ENCODE measurements at regions of chr6 and their contacts with region 1.

Region 1: DNA sequence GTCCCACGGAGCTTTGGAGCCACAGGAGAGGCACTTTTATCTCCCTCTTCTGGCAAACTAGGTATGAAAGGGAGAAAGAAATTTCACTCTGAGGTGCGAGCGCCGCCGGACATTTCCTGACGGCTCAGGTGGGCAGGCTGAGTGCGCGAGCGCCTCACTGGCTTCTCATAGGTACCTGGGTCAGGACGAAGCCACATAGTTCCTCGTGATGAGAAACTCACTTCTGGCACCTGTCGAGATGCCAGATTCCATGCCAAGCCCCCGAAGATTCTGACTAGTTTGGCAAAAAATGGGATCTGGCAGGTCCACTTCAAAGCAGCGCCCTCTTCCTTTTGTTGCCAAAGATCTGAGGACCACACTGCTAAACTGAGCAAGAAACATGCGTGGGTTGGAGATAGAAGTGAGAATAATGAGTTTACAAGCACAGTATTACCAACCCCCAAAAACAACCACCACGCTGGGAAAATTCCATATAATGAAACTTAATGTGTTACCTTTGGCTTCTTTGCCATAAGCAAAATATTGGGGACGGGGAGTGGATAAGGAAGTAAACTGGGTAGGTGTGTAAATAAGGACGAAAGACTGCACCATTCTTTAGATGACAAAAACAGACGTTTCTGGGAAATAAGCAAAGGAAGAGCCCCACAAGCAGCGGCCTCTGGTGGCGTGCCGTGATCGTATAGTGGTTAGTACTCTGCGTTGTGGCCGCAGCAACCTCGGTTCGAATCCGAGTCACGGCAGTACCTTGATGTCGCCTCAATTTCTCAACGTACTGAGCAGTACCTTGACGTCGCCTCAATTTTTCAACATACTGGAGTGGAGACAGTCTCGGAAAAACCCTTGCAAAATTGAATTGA is 89.8 kb upstream of the PRSS16 start:
- DNase-seq: peak; percentile 86
- H3K4me3 ChIP-seq: peak overlapping the region; percentile 48 to 82 (median 60)
- H3K27ac ChIP-seq: no peak overlapping the region
- H3K4me1 ChIP-seq: peaks cover 6% of the 10 kb centered on the region
- H3K27me3 ChIP-seq: no peaks in the 10 kb centered on the region
- CTCF ChIP-seq: peak; percentile 16 to 55

Region 2: DNA sequence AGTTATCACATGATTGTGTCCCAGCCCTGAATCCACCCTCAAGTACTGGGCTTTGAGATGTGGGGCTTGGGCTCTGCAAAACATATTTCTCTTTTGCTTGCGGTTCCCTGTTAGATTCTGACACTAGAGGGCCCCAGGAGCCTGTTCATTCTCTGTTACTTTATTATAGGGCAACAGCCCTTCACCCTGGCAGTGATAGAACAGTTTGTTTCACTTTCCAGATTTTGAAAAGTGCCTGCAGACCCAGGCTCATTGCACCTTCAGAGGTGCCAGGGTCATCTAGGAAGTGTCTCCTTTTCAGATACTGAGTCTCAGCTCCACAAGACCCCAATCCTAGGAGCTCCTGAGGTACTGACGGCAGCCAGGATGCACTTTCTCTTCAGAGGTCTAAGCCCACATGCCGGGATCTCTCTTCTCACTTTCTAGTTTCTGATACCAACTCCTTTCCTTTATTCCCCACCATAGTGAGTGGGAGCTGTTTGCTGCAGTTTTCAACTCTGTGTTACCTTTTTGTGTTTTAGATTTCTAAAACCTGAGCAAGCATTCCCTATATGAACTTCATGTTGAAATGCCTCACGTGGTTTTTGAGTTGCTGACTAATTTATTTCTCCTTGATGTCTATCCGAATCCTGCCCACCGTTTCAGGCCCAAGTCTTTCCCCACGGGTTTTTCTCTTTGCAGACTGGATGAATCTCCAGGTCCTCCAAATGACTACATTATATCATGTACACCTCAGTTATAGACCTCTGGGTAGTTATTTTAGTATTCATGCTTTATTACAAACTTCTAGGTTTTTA is 550.1 kb before region 1 on chr6:
- CTCF ChIA-PET with region 1: no interaction called
- dilution Hi-C with region 1: no loop called
- in situ Hi-C with region 1: no loop called
- intact Hi-C with region 1: loop called (anchors 1 kb)
- DNase-seq: peak; percentile 43
- H3K4me3 ChIP-seq: peak overlapping the region in 2 of 3 experiments; percentile 16 to 22
- H3K27ac ChIP-seq: no peak overlapping the region
- H3K4me1 ChIP-seq: no peaks in the 10 kb centered on the region
- H3K27me3 ChIP-seq: no peaks in the 10 kb centered on the region
- CTCF ChIP-seq: peak; percentile 65 to 85

Region 3: GRCh38 chr6:27126815-27127537 is 30.7 kb before region 1 on chr6:
- CTCF ChIA-PET with region 1: interaction called, 3 read pairs
- dilution Hi-C with region 1: no loop called
- in situ Hi-C with region 1: no loop called
- intact Hi-C with region 1: loop called (anchors 1 kb)
- DNase-seq: peak; percentile 87
- H3K4me3 ChIP-seq: peak overlapping the region; percentile 37 to 59 (median 39)
- H3K27ac ChIP-seq: no peak overlapping the region
- H3K4me1 ChIP-seq: peaks cover 12% of the 10 kb centered on the region
- H3K27me3 ChIP-seq: no peaks in the 10 kb centered on the region
- CTCF ChIP-seq: peak; percentile 83

Region 4: DNA sequence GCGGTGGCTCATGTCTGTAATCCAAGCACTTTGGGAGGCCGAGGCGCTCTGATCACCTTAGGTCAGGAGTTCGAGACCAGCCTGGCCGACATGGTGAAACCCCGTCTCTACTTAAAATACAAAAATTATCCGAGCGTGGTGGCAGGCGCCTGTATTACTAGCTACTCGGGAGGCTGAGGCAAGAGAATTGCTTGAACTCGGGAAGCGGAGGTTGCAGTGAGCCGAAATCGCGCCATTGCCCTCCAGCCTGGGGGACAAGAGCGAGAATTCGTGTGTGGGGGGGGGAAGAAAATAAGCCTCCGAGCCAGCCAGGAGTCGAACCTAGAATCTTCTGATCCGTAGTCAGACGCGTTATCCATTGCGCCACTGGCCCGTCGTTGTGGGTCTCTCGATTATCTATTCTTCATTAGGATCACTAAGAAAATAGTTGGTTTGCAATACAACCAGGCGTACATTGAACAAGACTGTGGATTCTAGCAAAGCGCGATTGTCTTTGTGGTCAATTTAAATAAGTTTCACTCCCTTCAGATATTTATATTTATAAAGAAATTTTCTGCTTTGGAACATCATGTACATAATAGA is 55.9 kb after region 1 on chr6:
- CTCF ChIA-PET with region 1: no interaction called
- dilution Hi-C with region 1: no loop called
- in situ Hi-C with region 1: no loop called
- intact Hi-C with region 1: loop called (anchors 1 kb)
- DNase-seq: peak; percentile 40
- H3K4me3 ChIP-seq: peak overlapping the region in 1 of 3 experiments; percentile 58
- H3K27ac ChIP-seq: no peak overlapping the region
- H3K4me1 ChIP-seq: no peaks in the 10 kb centered on the region
- H3K27me3 ChIP-seq: no peaks in the 10 kb centered on the region
- CTCF ChIP-seq: no peak

Region 5: DNA sequence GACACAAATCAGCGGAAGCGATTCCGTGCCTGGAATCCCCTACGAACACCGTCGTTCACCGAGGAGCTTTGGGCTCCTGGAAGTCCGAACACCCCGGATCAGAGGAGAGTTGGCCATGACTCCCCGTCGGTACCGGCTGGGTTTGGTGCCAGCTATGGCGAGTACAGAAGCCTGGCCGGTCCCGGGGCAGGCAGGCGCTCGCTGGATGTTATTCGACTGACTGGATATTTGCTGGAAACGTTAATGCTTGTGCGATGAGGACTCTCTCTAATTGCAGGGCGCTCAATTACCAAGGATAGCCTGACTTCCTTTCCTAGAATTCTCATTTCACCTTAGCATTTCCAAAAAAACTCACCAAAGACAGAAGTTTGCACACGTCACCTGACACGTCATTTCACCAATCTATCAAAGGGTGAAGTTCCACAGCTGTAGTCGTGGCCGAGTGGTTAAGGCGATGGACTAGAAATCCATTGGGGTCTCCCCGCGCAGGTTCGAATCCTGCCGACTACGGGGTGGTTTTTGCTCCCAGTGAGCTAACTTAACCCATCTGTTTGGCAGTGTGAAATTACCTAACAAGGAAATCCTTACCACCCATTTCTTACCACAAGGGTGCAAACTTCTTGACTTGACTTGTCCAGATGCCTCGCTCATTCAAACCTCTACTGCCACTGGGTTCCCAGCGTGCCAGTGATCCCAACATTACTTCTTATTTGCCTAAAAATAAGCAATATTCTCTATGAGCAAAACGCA is 337.9 kb after region 1 on chr6:
- CTCF ChIA-PET with region 1: no interaction called
- dilution Hi-C with region 1: no loop called
- in situ Hi-C with region 1: no loop called
- intact Hi-C with region 1: loop called (anchors 5 kb)
- DNase-seq: peak; percentile 93
- H3K4me3 ChIP-seq: peak overlapping the region; percentile 62 to 70 (median 65)
- H3K27ac ChIP-seq: peak overlapping the region; percentile 50
- H3K4me1 ChIP-seq: peaks cover 4% of the 10 kb centered on the region
- H3K27me3 ChIP-seq: no peaks in the 10 kb centered on the region
- CTCF ChIP-seq: peak in 1 of 2 donors; percentile 10